GM12878 (cell line): ENCODE measurements at regions of chr7 and their contacts with region 1.

Region 1: DNA sequence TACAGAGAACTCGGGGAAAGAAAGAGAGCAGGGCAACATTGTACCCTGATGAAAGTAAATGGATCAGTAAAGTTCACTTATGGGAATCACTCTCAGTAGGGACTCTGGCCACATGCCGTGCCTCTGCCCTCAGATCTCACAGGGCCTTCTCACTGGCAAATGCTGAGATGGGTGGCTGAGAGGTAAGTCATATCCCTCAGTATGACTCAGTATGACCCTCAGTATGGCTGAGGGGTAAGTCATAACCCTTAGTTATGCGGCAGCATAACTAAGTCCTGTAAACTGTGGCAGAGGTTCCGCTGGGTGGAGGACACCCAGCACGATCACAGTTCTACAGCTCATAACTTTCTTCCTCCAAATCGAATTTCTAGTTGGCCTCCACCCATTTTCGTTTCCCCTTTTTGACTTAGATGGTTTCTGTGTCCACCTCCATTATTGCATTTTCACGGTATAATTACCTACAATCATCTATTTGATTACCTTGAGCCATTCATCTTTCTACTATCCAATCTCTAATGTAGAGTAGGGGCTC is 26.5 kb upstream of the WNT16 start:
- DNase-seq: no peak
- ATAC-seq: peak; percentile 97
- H3K4me3 ChIP-seq: no peak overlapping the region
- H3K27ac ChIP-seq: no peak overlapping the region
- H3K4me1 ChIP-seq: peaks cover 29% of the 10 kb centered on the region
- H3K27me3 ChIP-seq: no peaks in the 10 kb centered on the region
- CTCF ChIP-seq: no peak
- EP300 ChIP-seq: peak in 1 of 2 experiments; percentile 67; a peak in 1 of 4 replicates
- POLR2A ChIP-seq: no peak
- RAD21 ChIP-seq: no peak

Region 2: GRCh38 chr7:121313793-121314676 is 11.8 kb after region 1 on chr7:
- CTCF ChIA-PET with region 1: interaction called, 3 read pairs
- POLR2A ChIA-PET with region 1: interaction called, 3 read pairs
- RAD21 ChIA-PET with region 1: interaction called, 9 read pairs
- SMC1A ChIA-PET with region 1: interaction called, 11 read pairs
- in situ Hi-C with region 1: no loop called
- intact Hi-C with region 1: no loop called
- DNase-seq: peak; percentile 50
- ATAC-seq: peak; percentile 91
- H3K4me3 ChIP-seq: no peak overlapping the region
- H3K27ac ChIP-seq: no peak overlapping the region
- H3K4me1 ChIP-seq: peaks cover 12% of the 10 kb centered on the region
- H3K27me3 ChIP-seq: no peaks in the 10 kb centered on the region
- CTCF ChIP-seq: no peak
- EP300 ChIP-seq: peak; percentile 74 to 85; a peak in 3 of 4 replicates
- POLR2A ChIP-seq: no peak
- RAD21 ChIP-seq: 0 out of 2 replicates have a peak, but pooled peaks have one; percentile 12